ENCODE measurements at regions of chr11 and their contacts with region 1.

Region 1: GRCh38 chr11:128624269-128625175 is 37.2 kb upstream of the ETS1 start:
- DNase-seq: no peak
- ATAC-seq: peak; percentile 77
- H3K4me3 ChIP-seq: no peak overlapping the region
- H3K27ac ChIP-seq: peak overlapping the region; percentile 86
- H3K4me1 ChIP-seq: peaks cover 66% of the 10 kb centered on the region
- H3K27me3 ChIP-seq: no peaks in the 10 kb centered on the region
- CTCF ChIP-seq: no peak
- EP300 ChIP-seq: peak in 1 of 2 experiments; percentile 21; a peak in 1 of 4 replicates
- POLR2A ChIP-seq: no peak
- RAD21 ChIP-seq: no peak

Region 2: GRCh38 chr11:128302425-128303186 is 321.9 kb before region 1 on chr11:
- CTCF ChIA-PET with region 1: interaction called, 5 read pairs
- POLR2A ChIA-PET with region 1: interaction called, 5 read pairs
- RAD21 ChIA-PET with region 1: interaction called, 23 read pairs
- SMC1A ChIA-PET with region 1: interaction called, 16 read pairs
- in situ Hi-C with region 1: no loop called
- intact Hi-C with region 1: no loop called
- DNase-seq: peak; percentile 82
- ATAC-seq: peak; percentile 89
- H3K4me3 ChIP-seq: no peak overlapping the region
- H3K27ac ChIP-seq: peak overlapping the region; percentile 35; the same call in 1 of the 2 replicates
- H3K4me1 ChIP-seq: peaks cover 62% of the 10 kb centered on the region
- H3K27me3 ChIP-seq: no peaks in the 10 kb centered on the region
- CTCF ChIP-seq: 0 out of 6 replicates have a peak, but pooled peaks of 1 of the 3 experiments have one; percentile 11
- EP300 ChIP-seq: peak; percentile 6 to 8; a peak in 1 of 4 replicates
- POLR2A ChIP-seq: no peak
- RAD21 ChIP-seq: no peak

Region 3: DNA sequence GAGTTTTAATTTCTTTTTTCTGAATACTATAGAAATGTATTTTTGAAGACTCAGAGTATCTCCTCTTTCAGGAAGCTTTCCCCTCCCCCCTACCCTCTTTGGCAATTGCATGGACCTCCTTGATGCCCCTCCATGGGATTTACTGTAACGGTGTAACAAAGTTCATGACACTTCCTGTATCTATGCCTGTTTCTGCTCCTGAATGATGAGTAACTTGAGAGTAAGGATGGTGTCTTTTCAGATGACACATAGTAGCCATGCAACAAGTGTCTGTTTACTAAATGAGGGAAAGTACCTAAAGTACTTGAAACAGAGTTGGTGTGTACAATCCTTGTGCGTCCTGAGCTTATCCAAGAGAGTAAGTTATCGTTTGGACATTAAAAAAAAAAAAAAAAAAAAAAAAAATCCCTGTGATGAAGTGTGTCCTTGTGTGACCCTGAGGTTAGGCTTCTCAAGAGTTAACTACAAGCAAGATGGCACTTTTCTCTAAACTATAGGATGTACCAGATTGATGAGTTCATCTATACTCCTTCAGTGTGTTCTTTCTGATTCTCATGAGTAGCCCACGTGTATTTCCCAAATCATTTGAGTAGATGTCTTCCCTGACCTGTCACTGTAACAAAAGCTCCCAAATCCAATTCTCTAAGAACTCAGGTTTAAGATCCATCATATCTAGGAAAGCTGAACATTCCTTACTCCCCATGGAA is 44.6 kb before region 1 on chr11:
- CTCF ChIA-PET with region 1: interaction called, 3 read pairs
- POLR2A ChIA-PET with region 1: interaction called, 3 read pairs
- RAD21 ChIA-PET with region 1: interaction called, 11 read pairs
- SMC1A ChIA-PET with region 1: interaction called, 5 read pairs
- in situ Hi-C with region 1: no loop called
- intact Hi-C with region 1: no loop called
- DNase-seq: no peak
- ATAC-seq: peak; percentile 86
- H3K4me3 ChIP-seq: no peak overlapping the region
- H3K27ac ChIP-seq: no peak overlapping the region
- H3K4me1 ChIP-seq: peaks cover 14% of the 10 kb centered on the region
- H3K27me3 ChIP-seq: no peaks in the 10 kb centered on the region
- CTCF ChIP-seq: no peak
- EP300 ChIP-seq: no peak
- POLR2A ChIP-seq: no peak
- RAD21 ChIP-seq: no peak

Region 4: GRCh38 chr11:128603752-128604414 is 20.6 kb before region 1 on chr11:
- CTCF ChIA-PET with region 1: interaction called, 444 read pairs
- POLR2A ChIA-PET with region 1: interaction called, 83 read pairs
- RAD21 ChIA-PET with region 1: interaction called, 273 read pairs
- SMC1A ChIA-PET with region 1: interaction called, 596 read pairs
- in situ Hi-C with region 1: no loop called
- intact Hi-C with region 1: no loop called
- DNase-seq: peak; percentile 44
- ATAC-seq: peak; percentile 91
- H3K4me3 ChIP-seq: no peak overlapping the region
- H3K27ac ChIP-seq: no peak overlapping the region
- H3K4me1 ChIP-seq: peaks cover 6% of the 10 kb centered on the region
- H3K27me3 ChIP-seq: no peaks in the 10 kb centered on the region
- CTCF ChIP-seq: peak; percentile 5 to 68 (median 38); a peak in 5 of 6 replicates
- EP300 ChIP-seq: no peak
- POLR2A ChIP-seq: no peak
- RAD21 ChIP-seq: peak; percentile 87

Region 5: DNA sequence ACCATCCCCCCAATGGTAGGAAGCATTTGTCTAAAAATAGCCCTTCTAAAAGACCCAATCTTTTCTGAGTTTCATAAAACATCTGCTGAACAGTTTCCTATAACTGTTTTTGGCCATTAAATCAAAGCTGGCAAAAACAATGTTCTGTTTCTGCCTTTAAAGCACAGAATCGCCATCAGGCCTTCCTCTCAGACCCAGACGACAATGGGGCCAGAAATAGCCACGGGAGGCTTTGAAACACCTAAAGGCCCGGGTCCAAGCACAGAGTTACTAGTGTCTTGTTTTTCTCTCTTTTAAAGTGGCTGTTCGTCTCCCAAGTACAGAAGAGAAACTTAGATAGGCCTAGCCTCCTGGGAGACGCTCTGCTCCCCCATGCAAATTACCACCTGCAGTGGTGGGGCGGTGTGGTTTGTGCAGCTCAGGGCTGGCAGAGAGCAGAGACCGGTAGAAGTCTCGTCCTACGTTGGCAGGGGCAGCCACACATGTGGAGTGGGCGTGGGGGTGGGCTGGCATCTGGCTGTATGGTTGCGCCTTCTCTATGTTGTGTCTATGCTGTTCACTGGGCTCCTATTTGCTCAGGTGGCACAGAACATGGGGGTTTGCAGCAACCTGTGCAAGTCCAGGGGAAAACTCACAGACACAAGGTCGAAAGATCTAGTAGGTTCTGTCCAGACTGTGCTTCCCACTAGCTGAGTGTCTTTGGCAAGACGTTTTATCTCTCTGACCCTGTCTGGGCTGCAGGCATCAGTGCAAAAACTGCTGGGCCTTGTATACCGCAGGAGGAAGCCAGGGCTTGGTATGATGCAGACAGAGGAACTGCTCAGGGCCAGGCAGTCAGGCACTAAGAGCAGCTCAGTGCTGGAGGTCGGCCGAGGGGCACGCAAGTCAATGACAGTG is 13.6 kb before region 1 on chr11:
- CTCF ChIA-PET with region 1: interaction called, 444 read pairs
- POLR2A ChIA-PET with region 1: interaction called, 83 read pairs
- RAD21 ChIA-PET with region 1: interaction called, 273 read pairs
- SMC1A ChIA-PET with region 1: interaction called, 596 read pairs
- in situ Hi-C with region 1: no loop called
- intact Hi-C with region 1: loop called (anchors 1 kb)
- DNase-seq: peak; percentile 93
- ATAC-seq: peak; percentile 97
- H3K4me3 ChIP-seq: peak overlapping the region; percentile 55
- H3K27ac ChIP-seq: peak overlapping the region; percentile 98
- H3K4me1 ChIP-seq: peaks cover 36% of the 10 kb centered on the region
- H3K27me3 ChIP-seq: no peaks in the 10 kb centered on the region
- CTCF ChIP-seq: no peak
- EP300 ChIP-seq: peak; percentile 42 to 86; a peak in 3 of 4 replicates
- POLR2A ChIP-seq: peak; percentile 69
- RAD21 ChIP-seq: no peak; the same call in 1 of the 2 replicates

Measured in GM12878 (cell line).